A549 (cell line): ENCODE measurements at regions of chr11 and their contacts with region 1.

Region 1: GRCh38 chr11:12052676-12053605 is 44.5 kb upstream of the DKK3 start:
- DNase-seq: peak in 1 of 2 experiments; percentile 57
- ATAC-seq: peak in 1 of 2 experiments; percentile 48; a peak in 3 of 6 replicates
- H3K4me3 ChIP-seq: no peak overlapping the region
- H3K27ac ChIP-seq: peak overlapping the region; percentile 77 to 83
- H3K4me1 ChIP-seq: peaks cover 46% of the 10 kb centered on the region
- CTCF ChIP-seq: no peak
- EP300 ChIP-seq: no peak
- POLR2A ChIP-seq: no peak
- RAD21 ChIP-seq: peak; percentile 33 to 48; a peak in 4 of 5 replicates

Region 2: DNA sequence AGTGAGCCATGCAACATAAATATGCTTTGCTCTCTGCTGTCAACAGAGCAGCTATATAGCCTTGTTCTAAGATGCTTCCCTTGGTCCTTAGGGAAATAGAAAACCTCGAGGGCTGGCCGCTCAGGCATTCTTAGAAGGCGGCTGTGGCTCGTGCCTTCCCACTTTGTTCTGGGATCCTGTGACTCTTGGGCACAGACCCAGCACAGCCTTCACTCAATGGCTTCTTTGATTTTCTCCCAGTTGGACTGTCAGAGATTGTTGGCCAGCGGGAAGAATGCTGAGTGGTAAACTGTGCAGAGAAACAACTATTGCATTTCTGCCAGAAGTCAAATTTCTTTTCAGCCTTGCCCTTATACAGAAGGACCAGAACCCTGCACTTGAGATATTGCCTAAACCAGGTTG is 47.9 kb after region 1 on chr11:
- CTCF ChIA-PET with region 1: interaction called, 11 read pairs
- POLR2A ChIA-PET with region 1: no interaction called
- DNase-seq: no peak
- ATAC-seq: no peak
- H3K4me3 ChIP-seq: no peak overlapping the region
- H3K27ac ChIP-seq: peak overlapping the region in 1 of 2 experiments; percentile 51; a peak in 2 of 6 replicates
- H3K4me1 ChIP-seq: peaks cover 12% of the 10 kb centered on the region
- CTCF ChIP-seq: no peak
- EP300 ChIP-seq: no peak
- POLR2A ChIP-seq: no peak
- RAD21 ChIP-seq: no peak